MCF 10A (cell line): ENCODE measurements at regions of chr2 and their contacts with region 1.

Region 1: GRCh38 chr2:173402405-173402974 is 47.8 kb downstream of the CDCA7 start:
- DNase-seq: peak; percentile 87
- H3K4me3 Mint-ChIP-seq: peak overlapping the region; percentile 6
- H3K27ac Mint-ChIP-seq: no peak overlapping the region
- H3K4me1 Mint-ChIP-seq: peaks cover 11% of the 10 kb centered on the region
- H3K27me3 Mint-ChIP-seq: peaks cover 64% of the 10 kb centered on the region
- CTCF ChIP-seq: peak; percentile 86

Region 2: GRCh38 chr2:173414823-173415322 is 12.4 kb after region 1 on chr2:
- CTCF ChIA-PET with region 1: interaction called, 17 read pairs
- POLR2A ChIA-PET with region 1: interaction called, 3 read pairs
- intact Hi-C with region 1: no loop called
- DNase-seq: peak; percentile 97
- H3K4me3 Mint-ChIP-seq: no peak overlapping the region
- H3K27ac Mint-ChIP-seq: no peak overlapping the region
- H3K4me1 Mint-ChIP-seq: peaks cover 11% of the 10 kb centered on the region
- H3K27me3 Mint-ChIP-seq: peaks cover under 1% of the 10 kb centered on the region
- CTCF ChIP-seq: no peak

Region 3: DNA sequence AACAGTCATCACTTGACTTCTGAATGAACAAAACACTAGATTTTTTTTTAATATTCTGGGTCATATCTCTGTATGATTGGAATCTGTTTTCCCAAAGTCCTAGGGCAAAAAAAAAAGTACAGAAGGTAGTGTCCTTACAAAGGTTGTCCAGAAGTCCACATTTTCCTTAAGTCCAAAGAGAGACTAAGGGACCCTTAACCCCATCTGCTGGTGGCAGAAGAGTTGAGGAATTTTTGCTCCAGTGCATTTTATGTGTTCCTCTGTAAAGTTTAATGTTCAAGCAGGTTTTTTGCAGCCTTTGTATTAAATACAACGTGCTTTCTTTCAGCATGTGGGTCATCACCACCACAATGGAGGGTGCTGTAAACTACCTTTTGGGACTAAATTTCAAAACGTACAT is 346.8 kb after region 1 on chr2:
- CTCF ChIA-PET with region 1: interaction called, 5 read pairs
- POLR2A ChIA-PET with region 1: no interaction called
- intact Hi-C with region 1: loop called (anchors 1 kb)
- DNase-seq: peak; percentile 44
- H3K4me3 Mint-ChIP-seq: no peak overlapping the region
- H3K27ac Mint-ChIP-seq: no peak overlapping the region
- H3K4me1 Mint-ChIP-seq: no peaks in the 10 kb centered on the region
- H3K27me3 Mint-ChIP-seq: no peaks in the 10 kb centered on the region
- CTCF ChIP-seq: peak; percentile 45